ENCODE measurements at regions of chr15 and their contacts with region 1.

Region 1: DNA sequence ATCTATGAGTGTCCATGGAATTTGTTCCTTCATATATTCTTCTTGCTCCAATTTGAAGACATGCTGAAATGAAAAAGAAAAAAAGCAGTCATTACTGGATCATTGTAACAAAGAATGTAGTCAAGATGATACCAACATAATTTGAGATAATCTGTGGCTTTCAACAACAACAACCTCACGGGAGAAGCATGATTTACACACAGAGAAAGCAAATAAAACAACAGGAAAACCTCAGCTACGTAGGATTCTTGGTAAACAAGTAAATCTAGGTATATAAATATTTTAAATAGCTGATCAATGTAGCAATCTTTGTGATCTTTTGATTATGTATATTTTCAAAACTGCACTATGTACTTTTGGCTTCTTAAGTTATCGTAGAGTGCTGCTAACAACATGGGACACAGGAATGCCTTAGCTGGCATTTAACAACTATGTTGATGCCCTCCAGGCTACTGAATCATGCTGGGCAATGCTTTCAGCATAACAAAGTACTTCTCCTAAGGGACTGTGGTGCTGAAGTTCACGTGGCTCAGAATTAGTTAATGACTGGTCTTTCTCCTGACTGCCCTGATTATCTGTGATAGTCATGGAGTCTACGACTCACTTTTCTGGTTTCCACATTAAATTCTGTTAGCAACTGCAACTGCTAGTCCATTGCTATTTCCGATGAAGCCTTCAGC is 96.5 kb upstream of the MYO5C start:
- DNase-seq: no peak
- ATAC-seq: no peak
- H3K4me3 ChIP-seq: no peak overlapping the region
- H3K4me3 Mint-ChIP-seq: no peak overlapping the region
- H3K27ac ChIP-seq: no peak overlapping the region
- H3K27ac Mint-ChIP-seq: no peak overlapping the region
- H3K4me1 ChIP-seq: no peaks in the 10 kb centered on the region
- H3K4me1 Mint-ChIP-seq: no peaks in the 10 kb centered on the region
- H3K27me3 ChIP-seq: no peaks in the 10 kb centered on the region
- H3K27me3 Mint-ChIP-seq: no peaks in the 10 kb centered on the region

Region 2: GRCh38 chr15:52171386-52171785 is 220.8 kb before region 1 on chr15:
- CTCF ChIA-PET with region 1: no interaction called
- POLR2A ChIA-PET with region 1: interaction called in 1 of 2 experiments, 20 read pairs
- DNase-seq: peak in 4 of 35 experiments; percentile 9 to 46 (median 16)
- ATAC-seq: peak; percentile 78 to 89 (median 84)
- H3K4me3 ChIP-seq: no peak overlapping the region
- H3K4me3 Mint-ChIP-seq: peak overlapping the region in 1 of 3 donors; percentile 29
- H3K27ac ChIP-seq: no peak overlapping the region
- H3K27ac Mint-ChIP-seq: peak overlapping the region; percentile 49 to 63
- H3K4me1 ChIP-seq: peaks cover 5 to 9% of the 10 kb centered on the region in 2 experiments
- H3K4me1 Mint-ChIP-seq: peaks cover 60 to 73% (median 62%) of the 10 kb centered on the region in 3 donors
- H3K27me3 ChIP-seq: no peaks in the 10 kb centered on the region
- H3K27me3 Mint-ChIP-seq: no peaks in the 10 kb centered on the region

Region 3: DNA sequence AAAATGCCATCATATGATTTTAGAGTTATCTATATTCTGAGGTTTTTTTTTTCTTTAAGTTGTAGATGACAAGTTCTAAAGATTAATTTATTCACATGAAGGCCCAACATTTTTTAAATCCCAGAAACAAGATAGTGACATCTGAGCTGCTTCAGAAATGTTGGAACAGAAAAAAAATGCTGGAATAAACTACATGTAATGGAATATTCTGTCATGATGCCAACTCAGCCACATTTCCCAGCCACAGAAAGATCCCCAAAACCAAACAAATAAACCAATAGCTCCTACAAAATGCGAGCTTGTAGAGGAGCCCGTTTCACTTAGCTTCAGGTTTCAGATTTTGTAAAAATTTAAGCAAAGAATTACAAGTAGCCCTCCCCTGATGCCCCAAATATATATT is 14.5 kb after region 1 on chr15:
- CTCF ChIA-PET with region 1: no interaction called
- POLR2A ChIA-PET with region 1: no interaction called
- DNase-seq: no peak
- ATAC-seq: no peak
- H3K4me3 ChIP-seq: no peak overlapping the region
- H3K4me3 Mint-ChIP-seq: no peak overlapping the region
- H3K27ac ChIP-seq: no peak overlapping the region
- H3K27ac Mint-ChIP-seq: no peak overlapping the region
- H3K4me1 ChIP-seq: no peaks in the 10 kb centered on the region
- H3K4me1 Mint-ChIP-seq: peaks cover 0 to 3% (median 0%) of the 10 kb centered on the region in 3 donors
- H3K27me3 ChIP-seq: no peaks in the 10 kb centered on the region
- H3K27me3 Mint-ChIP-seq: no peaks in the 10 kb centered on the region

Measured in T-cell (primary cell).